ENCODE measurements at regions of chr4 and their contacts with region 1.

Region 1: DNA sequence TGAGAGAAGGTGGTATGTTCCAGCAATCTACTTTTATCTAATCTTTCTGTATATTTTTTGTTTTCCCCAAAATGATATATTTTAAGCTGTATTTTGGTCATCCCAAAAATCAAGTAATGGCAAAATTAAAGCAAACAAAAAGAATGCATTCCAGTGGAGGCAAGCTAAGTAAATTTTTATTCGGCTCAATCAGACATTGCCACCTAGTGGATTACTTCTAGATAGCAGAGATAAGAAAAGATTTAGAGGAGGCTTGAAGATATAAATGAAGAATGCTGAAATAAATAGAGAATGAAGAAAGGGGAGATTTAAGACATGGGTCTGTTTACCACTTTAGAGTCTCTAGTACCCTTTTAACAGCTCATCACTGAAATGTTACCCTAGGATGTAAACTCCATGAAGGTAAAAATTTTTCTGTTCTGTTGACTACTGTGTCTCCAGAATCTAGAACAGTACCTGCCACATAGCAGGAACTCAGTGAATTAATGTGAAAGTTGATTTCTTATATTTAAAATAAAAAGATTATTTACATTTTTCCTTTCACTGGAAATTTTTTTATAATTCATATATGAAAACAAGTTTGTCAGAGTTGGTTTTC is 110.9 kb upstream of the ANK2 start:
- DNase-seq: peak; percentile 38
- H3K4me3 ChIP-seq: no peak overlapping the region
- H3K27ac ChIP-seq: peak overlapping the region in 1 of 2 experiments; percentile 45; a peak in 1 of 4 replicates
- H3K4me1 ChIP-seq: peaks cover 0 to 19% of the 10 kb centered on the region in 2 experiments; a peak in 1 of 4 replicates
- H3K27me3 ChIP-seq: no peaks in the 10 kb centered on the region
- CTCF ChIP-seq: peak; percentile 91
- EP300 ChIP-seq: no peak
- RAD21 ChIP-seq: peak; percentile 88

Region 2: DNA sequence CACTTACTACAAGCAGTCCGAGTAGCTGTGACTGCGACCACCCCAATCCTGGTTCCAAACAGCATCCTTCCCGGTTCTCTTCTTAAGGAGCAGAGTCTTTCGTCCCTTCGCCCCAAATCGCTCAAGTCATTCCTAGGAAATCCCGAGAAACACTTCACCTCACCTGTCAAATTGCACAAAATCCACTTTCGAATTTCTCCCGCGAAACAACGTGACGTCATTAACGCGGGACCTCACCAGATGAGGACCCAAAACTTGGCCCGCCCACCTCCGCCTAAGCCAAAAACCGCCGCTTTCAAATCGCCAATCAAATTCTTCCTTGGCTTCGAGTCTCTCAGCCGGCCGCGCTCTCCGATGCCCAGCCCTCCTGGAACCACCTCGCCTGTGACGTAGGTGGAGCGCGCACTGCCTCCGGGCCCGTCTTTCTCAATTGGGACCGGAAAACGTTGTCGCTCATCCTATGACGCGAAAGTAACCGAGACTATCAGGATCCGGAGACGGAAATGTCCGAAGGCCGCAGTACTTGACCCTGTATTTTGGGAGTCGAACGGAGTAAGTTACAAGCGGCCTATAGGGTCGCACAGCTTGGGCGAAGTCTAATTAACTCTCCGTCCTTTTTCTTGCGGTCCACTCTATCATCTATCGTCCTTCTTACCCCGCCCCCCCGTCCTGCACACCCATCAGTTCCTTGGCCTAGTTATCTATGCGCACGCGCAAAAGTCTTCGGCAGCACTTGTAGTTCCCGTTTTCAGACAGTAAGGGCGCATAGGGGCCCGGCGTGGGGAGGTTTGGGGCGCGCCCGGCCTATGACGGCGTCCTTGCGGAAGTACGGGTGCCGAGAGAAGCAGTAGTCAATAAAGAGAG is 301.6 kb before region 1 on chr4 and contains the starts of genes LARP7 and ZGRF1:
- CTCF ChIA-PET with region 1: interaction called, 14 read pairs
- POLR2A ChIA-PET with region 1: no interaction called
- DNase-seq: peak; percentile 86
- H3K4me3 ChIP-seq: peak within 1 kb of the TSS; percentile 82 to 98
- H3K27ac ChIP-seq: peak within 1 kb of the TSS; percentile 96 to 97
- H3K4me1 ChIP-seq: peaks cover 10 to 12% of the 10 kb centered on the region in 2 experiments; a peak in 3 of 4 replicates
- H3K27me3 ChIP-seq: no peaks in the 10 kb centered on the region
- CTCF ChIP-seq: peak; percentile 88
- EP300 ChIP-seq: no peak; a peak in 1 of 4 replicates
- RAD21 ChIP-seq: peak; percentile 47; the same call in 1 of the 2 replicates
- polyA plus RNA-seq, gene LARP7: 9.4 and 10.5 TPM in 2 replicates
- polyA plus RNA-seq, gene ZGRF1: 2.4 and 2.9 TPM in 2 replicates

Region 3: DNA sequence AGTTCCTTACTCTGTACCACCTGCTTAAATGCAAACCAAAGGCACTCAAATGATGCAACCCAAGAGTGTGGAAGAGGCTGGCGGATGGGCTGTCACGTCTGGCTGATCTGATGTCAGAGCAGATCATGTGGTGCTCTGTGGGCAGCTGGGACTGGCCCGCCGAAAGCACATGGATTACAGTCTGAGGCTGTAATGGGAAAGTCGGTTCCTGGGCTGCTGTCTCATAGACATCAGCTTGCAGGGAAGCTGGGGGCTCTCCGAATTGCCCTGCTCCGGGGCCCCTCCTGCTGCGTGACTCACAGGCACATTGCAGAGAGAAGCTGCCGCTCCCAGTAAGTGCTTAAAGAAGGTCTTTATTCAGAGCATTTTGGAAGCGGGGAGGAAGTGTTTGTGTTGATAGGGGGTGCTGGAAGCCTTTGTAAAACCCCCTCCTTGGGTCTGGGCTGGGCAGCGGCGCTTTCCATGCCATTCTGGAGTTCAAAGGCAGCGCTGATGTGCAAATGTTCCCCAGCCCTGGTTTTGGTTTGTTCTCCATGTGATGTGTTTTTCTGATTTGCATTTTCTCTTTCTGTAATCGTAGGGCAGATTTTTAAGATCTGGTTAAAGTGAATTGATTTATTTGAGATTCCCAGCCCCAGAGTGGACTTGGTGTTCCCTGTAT is 120.5 kb before region 1 on chr4:
- CTCF ChIA-PET with region 1: interaction called, 24 read pairs
- POLR2A ChIA-PET with region 1: no interaction called
- DNase-seq: peak; percentile 86
- H3K4me3 ChIP-seq: peak overlapping the region; percentile 61 to 66
- H3K27ac ChIP-seq: peak overlapping the region; percentile 43 to 88; a peak in 3 of 4 replicates
- H3K4me1 ChIP-seq: peaks cover 0 to 4% of the 10 kb centered on the region in 2 experiments; a peak in 1 of 4 replicates
- H3K27me3 ChIP-seq: no peaks in the 10 kb centered on the region
- CTCF ChIP-seq: no peak
- EP300 ChIP-seq: no peak
- RAD21 ChIP-seq: peak; percentile 46; the same call in 1 of the 2 replicates

Region 4: GRCh38 chr4:112853662-112854256 is 84.8 kb before region 1 on chr4:
- CTCF ChIA-PET with region 1: interaction called, 76 read pairs
- POLR2A ChIA-PET with region 1: no interaction called
- DNase-seq: no peak
- H3K4me3 ChIP-seq: no peak overlapping the region; a peak in 1 of 4 replicates
- H3K27ac ChIP-seq: peak overlapping the region in 1 of 2 experiments; percentile 31; a peak in 2 of 4 replicates
- H3K4me1 ChIP-seq: peaks cover 10 to 15% of the 10 kb centered on the region in 2 experiments; a peak in 3 of 4 replicates
- H3K27me3 ChIP-seq: no peaks in the 10 kb centered on the region
- CTCF ChIP-seq: peak; percentile 68
- EP300 ChIP-seq: no peak
- RAD21 ChIP-seq: peak; percentile 70

Region 5: GRCh38 chr4:112910109-112910736 is 28.3 kb before region 1 on chr4:
- CTCF ChIA-PET with region 1: interaction called, 27 read pairs
- POLR2A ChIA-PET with region 1: no interaction called
- DNase-seq: peak; percentile 33
- H3K4me3 ChIP-seq: peak overlapping the region; percentile 44 to 51
- H3K27ac ChIP-seq: peak overlapping the region; percentile 41 to 96; a peak in 3 of 4 replicates
- H3K4me1 ChIP-seq: peaks cover 7 to 8% of the 10 kb centered on the region in 2 experiments; a peak in 3 of 4 replicates
- H3K27me3 ChIP-seq: no peaks in the 10 kb centered on the region
- CTCF ChIP-seq: peak; percentile 41
- EP300 ChIP-seq: peak; percentile 40 to 47; a peak in 2 of 4 replicates
- RAD21 ChIP-seq: peak; percentile 39

Region 6: DNA sequence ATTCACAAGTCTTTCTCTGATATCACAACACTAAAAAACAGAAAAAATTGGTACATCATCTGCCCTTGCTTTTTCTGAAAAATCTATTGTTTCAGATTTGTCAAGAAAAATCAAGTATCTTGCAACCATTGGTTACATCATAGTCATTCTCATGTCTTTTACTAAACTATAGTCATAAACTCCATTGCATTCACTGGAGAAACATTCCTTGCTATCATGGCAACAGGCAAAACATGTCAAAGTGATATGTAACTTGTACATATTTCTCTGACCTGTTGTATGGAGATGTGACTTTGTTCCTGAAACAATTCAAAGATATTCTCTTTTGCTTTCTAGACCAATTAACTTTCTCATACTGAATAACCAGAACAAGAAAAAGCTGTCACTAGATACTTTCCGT is 11.0 kb before region 1 on chr4:
- CTCF ChIA-PET with region 1: interaction called, 63 read pairs
- POLR2A ChIA-PET with region 1: no interaction called
- DNase-seq: no peak
- H3K4me3 ChIP-seq: no peak overlapping the region
- H3K27ac ChIP-seq: no peak overlapping the region
- H3K4me1 ChIP-seq: no peaks in the 10 kb centered on the region; a peak in 1 of 4 replicates
- H3K27me3 ChIP-seq: no peaks in the 10 kb centered on the region
- CTCF ChIP-seq: no peak
- EP300 ChIP-seq: no peak
- RAD21 ChIP-seq: no peak

Region 7: DNA sequence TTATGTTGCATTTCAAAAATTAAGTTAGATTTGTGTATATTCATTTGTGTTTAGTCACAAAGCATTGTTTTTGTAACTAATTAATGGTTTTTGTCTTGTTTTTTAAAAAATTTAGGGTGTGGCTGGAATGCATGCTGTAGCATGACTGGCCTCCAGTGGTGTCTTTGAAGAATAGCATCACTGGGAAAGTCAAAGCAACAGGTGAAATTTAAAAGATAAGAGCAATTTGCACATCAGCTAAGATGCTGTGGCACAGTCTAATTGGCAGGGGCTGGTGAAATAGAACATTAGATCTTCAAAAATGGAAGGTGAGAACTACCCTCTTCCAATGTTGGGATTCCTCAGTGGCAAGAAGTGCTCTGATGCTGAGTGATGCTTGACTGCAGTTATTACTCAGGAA is 156.2 kb after region 1 on chr4:
- CTCF ChIA-PET with region 1: interaction called, 38 read pairs
- POLR2A ChIA-PET with region 1: no interaction called
- DNase-seq: peak; percentile 37
- H3K4me3 ChIP-seq: no peak overlapping the region
- H3K27ac ChIP-seq: no peak overlapping the region
- H3K4me1 ChIP-seq: peaks cover 0 to 4% of the 10 kb centered on the region in 2 experiments; a peak in 2 of 4 replicates
- H3K27me3 ChIP-seq: no peaks in the 10 kb centered on the region
- CTCF ChIP-seq: peak; percentile 81
- EP300 ChIP-seq: no peak
- RAD21 ChIP-seq: peak; percentile 91